ENCODE measurements at regions of chr4 and their contacts with region 1.

Region 1: DNA sequence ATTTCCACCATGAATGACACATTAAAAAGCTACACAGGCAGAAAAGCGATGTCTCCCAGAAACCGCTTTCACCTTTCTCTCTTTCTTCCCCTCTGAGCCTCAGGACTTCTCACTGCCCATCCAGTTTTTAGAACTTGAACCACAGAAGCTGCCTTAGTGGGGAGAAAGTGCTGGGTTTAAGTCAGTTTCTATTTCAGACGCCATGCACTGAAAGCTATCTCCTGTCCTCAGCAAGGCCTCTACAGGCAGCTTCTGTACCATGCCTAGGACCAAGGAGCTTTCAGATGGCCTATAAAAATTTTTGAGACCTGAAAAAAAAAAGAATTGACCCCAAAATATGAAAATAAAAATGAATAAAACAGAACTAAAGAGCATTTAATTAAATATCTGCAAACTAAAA is 34.5 kb downstream of the RAB33B start:
- DNase-seq: no peak
- H3K4me3 ChIP-seq: no peak overlapping the region
- H3K27ac ChIP-seq: no peak overlapping the region
- H3K4me1 ChIP-seq: no peaks in the 10 kb centered on the region
- H3K27me3 ChIP-seq: no peaks in the 10 kb centered on the region
- CTCF ChIP-seq: no peak

Region 2: DNA sequence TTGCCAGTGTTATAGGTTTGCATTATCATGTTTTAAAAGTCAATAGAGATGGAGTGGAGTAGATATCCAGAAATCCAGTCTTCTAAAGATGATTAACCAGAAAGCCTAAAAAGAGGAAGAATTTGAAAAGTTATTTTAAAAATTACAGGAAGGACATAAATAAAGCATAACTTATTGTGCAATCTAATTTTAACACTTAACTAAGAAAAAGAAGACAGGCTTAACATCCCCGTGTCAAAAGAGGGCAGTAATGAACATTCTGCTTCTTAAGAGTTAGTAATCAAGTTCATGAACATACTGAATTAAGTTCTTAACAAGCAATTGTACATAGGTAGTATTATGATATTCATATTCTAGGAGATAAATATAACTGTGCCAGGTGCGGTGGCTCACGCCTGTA is 350.7 kb before region 1 on chr4:
- CTCF ChIA-PET with region 1: interaction called, 14 read pairs
- dilution Hi-C with region 1: no loop called
- in situ Hi-C with region 1: no loop called
- intact Hi-C with region 1: no loop called
- DNase-seq: no peak
- H3K4me3 ChIP-seq: no peak overlapping the region
- H3K27ac ChIP-seq: no peak overlapping the region
- H3K4me1 ChIP-seq: no peaks in the 10 kb centered on the region
- H3K27me3 ChIP-seq: no peaks in the 10 kb centered on the region
- CTCF ChIP-seq: no peak

Measured in mammary epithelial cell (primary cell).